MCF 10A (cell line): ENCODE measurements at regions of chr2 and their contacts with region 1.

Region 1: DNA sequence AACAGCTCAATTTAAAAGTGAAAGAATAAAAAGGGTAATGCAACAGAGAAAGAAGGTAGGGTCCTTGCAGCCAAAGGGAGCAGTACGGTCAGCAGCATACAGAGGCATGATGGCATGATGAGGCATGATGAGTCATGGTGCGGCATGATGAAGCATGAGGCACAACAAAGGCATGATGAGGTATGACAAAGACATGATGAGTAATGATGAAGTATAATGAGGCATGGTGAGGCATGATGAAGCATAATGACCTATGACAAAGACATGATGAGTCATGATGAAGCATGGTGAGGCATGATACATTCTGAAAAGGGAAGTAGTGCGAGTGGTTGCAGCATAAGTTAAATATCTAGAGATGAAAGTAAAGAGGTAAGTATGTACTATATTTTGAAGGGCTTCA is 673.2 kb downstream of the TMEM182 start:
- DNase-seq: peak; percentile 53
- H3K4me3 Mint-ChIP-seq: no peak overlapping the region
- H3K27ac Mint-ChIP-seq: no peak overlapping the region
- H3K4me1 Mint-ChIP-seq: no peaks in the 10 kb centered on the region
- H3K27me3 Mint-ChIP-seq: peaks cover 26% of the 10 kb centered on the region
- CTCF ChIP-seq: no peak

Region 2: GRCh38 chr2:103401621-103402020 is 33.4 kb before region 1 on chr2:
- CTCF ChIA-PET with region 1: no interaction called
- POLR2A ChIA-PET with region 1: no interaction called
- intact Hi-C with region 1: loop called (anchors 5 kb)
- DNase-seq: peak; percentile 14
- H3K4me3 Mint-ChIP-seq: no peak overlapping the region
- H3K27ac Mint-ChIP-seq: no peak overlapping the region
- H3K4me1 Mint-ChIP-seq: peaks cover 5% of the 10 kb centered on the region
- H3K27me3 Mint-ChIP-seq: peaks cover 21% of the 10 kb centered on the region
- CTCF ChIP-seq: no peak

Region 3: GRCh38 chr2:103445347-103445746 is 10.3 kb after region 1 on chr2:
- CTCF ChIA-PET with region 1: no interaction called
- POLR2A ChIA-PET with region 1: no interaction called
- intact Hi-C with region 1: no loop called
- DNase-seq: no peak
- H3K4me3 Mint-ChIP-seq: no peak overlapping the region
- H3K27ac Mint-ChIP-seq: no peak overlapping the region
- H3K4me1 Mint-ChIP-seq: no peaks in the 10 kb centered on the region
- H3K27me3 Mint-ChIP-seq: peaks cover 89% of the 10 kb centered on the region
- CTCF ChIP-seq: no peak